ENCODE measurements at regions of chr14 and their contacts with region 1.

Region 1: DNA sequence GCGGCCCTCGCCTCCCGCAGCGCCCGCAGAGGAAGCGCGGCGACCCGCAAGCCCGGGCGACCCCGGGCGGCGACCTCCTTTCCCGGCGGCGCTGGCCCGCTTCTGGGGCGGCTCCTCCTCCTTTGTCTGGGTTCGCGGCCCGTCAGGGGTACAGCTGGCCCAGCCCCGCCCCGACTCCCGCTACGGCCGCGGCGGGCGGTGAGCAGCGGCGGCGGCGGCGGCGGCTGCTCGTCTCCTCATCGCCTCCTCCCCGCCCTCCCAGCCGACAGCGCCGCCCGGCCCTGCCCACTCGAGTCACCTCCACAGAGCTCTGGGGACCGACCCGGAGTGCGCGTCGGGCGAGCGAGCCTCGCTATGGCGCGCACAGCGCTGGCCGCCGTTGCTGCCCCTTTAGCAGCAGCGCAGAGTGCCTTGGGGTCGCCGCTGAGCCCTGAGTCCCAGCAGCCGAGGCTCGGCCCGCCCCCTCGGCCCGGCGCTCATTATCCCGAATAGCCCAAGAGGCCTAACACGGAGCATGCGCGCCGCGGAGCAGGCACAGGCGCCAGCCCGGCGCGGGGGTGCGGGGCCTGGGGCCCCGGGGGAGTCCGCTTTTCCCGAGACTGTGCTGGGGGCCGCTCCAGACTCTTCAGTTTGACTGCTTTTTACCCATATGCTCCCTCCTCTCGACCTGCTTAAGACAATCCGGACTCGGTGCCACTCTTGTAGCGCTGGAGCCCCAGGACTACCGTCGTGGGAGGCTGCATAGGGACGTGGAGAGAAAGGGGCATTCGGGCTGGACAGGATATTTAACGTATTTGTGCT is at the start of gene SOS2:
- DNase-seq: peak; percentile 94
- total RNA-seq, gene SOS2: 34.8 TPM

Region 2: GRCh38 chr14:49862089-49862673 is 369.5 kb before region 1 on chr14:
- intact Hi-C with region 1: loop called (anchors 2 kb)
- DNase-seq: peak; percentile 94

Region 3: DNA sequence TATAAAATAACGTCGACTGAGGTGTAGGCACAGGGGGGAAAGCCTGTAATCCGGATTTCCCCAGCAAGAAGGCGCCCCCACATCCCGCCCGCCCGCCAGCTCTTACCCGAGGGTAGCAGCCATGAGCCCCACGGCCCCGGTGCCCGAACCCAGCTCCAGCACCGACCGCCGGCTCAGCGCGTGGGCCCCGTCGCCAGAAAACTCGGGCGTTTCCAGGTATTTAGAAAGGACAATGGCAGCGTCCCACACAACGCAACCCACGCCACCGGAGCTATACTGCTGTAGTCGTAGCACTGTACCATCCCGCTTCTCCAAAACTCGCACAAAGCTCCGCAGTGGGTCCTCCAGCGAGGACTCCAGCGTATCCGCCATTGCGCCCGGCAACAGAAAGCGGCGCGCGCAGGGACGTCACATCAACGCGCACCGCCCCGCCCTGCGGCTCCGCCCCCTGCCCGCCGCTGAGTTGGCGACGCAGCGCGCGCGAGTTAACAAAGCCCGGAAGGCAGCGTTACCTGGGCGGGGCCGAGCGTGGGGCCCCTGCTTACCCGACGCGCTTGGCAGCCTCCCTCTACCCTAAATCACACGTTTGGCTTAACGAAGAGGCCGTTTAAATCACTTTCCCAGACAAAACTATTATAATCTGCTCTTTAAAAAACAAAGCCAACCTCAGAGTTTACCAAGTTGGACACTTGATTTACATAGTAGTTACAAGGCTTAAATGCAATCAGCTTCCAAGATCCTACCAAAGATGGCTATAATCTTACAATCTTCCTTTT is 115.3 kb before region 1 on chr14 and contains the start of gene VCPKMT:
- intact Hi-C with region 1: loop called (anchors 2 kb)
- DNase-seq: peak; percentile 97
- total RNA-seq, gene VCPKMT: 3.0 TPM

Region 4: GRCh38 chr14:50311975-50312733 is 80.5 kb after region 1 on chr14 and contains the starts of genes DMAC2L and L2HGDH:
- intact Hi-C with region 1: loop called (anchors 5 kb)
- DNase-seq: peak; percentile 97
- total RNA-seq, gene DMAC2L: 29.3 TPM
- total RNA-seq, gene L2HGDH: 8.2 TPM